CD8-positive, alpha-beta T cell (primary cell): ENCODE measurements at regions of chr2 and their contacts with region 1.

Region 1: GRCh38 chr2:238462782-238463396 is 36.2 kb downstream of the ASB1 start:
- DNase-seq: peak in 2 of 9 experiments; percentile 57 to 69
- ATAC-seq: peak; percentile 77
- H3K4me3 ChIP-seq: no peak overlapping the region
- H3K4me3 Mint-ChIP-seq: no peak overlapping the region
- H3K27ac ChIP-seq: no peak overlapping the region
- H3K27ac Mint-ChIP-seq: no peak overlapping the region
- H3K4me1 ChIP-seq: no peaks in the 10 kb centered on the region
- H3K4me1 Mint-ChIP-seq: no peaks in the 10 kb centered on the region
- H3K27me3 ChIP-seq: no peaks in the 10 kb centered on the region
- H3K27me3 Mint-ChIP-seq: no peaks in the 10 kb centered on the region
- CTCF ChIP-seq: peak; percentile 90

Region 2: DNA sequence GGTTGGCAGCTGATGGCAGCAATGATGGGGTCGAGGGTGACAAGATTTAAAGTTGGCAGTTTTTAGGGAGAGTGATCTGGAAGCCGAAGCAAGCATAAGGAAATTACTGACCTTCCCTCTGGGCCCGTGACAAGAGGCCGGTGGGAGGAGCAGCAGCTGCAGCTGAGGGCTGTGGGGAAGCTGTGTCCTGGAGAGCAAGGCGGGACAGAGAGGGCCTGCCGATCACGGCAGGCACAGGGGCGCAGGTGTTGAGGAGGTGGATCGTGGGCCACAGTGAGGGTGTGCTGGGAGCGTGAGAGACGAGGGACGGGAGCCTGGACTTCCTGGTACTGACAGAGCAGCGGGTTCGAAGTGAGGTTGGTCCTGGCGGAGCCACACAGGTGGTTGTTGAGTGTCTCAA is 111.6 kb before region 1 on chr2:
- CTCF ChIA-PET with region 1: no interaction called
- POLR2A ChIA-PET with region 1: no interaction called
- intact Hi-C with region 1: no loop called
- DNase-seq: no peak
- ATAC-seq: no peak
- H3K4me3 ChIP-seq: no peak overlapping the region
- H3K4me3 Mint-ChIP-seq: no peak overlapping the region
- H3K27ac ChIP-seq: no peak overlapping the region
- H3K27ac Mint-ChIP-seq: no peak overlapping the region
- H3K4me1 ChIP-seq: no peaks in the 10 kb centered on the region
- H3K4me1 Mint-ChIP-seq: no peaks in the 10 kb centered on the region
- H3K27me3 ChIP-seq: no peaks in the 10 kb centered on the region
- H3K27me3 Mint-ChIP-seq: no peaks in the 10 kb centered on the region
- CTCF ChIP-seq: no peak

Region 3: DNA sequence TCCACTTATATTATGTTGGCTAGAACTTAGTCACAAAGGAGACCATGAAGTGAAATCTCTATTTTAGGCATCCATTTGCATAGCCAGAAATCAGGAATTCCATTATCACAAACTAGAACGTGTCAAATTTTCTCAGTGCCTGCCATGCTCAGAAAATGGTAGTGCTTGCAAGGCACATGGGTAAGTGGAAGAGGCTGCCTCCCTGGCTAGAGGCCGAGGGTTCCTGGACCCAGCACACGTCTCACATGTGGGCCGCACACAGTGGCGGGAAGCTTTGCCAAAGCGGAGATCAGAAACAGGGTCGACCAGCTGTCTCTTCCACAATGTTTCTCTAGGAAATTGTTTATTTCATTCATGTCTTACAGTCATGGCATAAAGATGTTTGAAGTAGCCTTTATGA is 100.3 kb before region 1 on chr2:
- CTCF ChIA-PET with region 1: interaction called, 13 read pairs
- POLR2A ChIA-PET with region 1: no interaction called
- intact Hi-C with region 1: loop called in 1 of 2 experiments (anchors 1 kb)
- DNase-seq: no peak
- ATAC-seq: no peak
- H3K4me3 ChIP-seq: no peak overlapping the region
- H3K4me3 Mint-ChIP-seq: no peak overlapping the region
- H3K27ac ChIP-seq: no peak overlapping the region
- H3K27ac Mint-ChIP-seq: no peak overlapping the region
- H3K4me1 ChIP-seq: no peaks in the 10 kb centered on the region
- H3K4me1 Mint-ChIP-seq: no peaks in the 10 kb centered on the region
- H3K27me3 ChIP-seq: no peaks in the 10 kb centered on the region
- H3K27me3 Mint-ChIP-seq: no peaks in the 10 kb centered on the region
- CTCF ChIP-seq: no peak

Region 4: DNA sequence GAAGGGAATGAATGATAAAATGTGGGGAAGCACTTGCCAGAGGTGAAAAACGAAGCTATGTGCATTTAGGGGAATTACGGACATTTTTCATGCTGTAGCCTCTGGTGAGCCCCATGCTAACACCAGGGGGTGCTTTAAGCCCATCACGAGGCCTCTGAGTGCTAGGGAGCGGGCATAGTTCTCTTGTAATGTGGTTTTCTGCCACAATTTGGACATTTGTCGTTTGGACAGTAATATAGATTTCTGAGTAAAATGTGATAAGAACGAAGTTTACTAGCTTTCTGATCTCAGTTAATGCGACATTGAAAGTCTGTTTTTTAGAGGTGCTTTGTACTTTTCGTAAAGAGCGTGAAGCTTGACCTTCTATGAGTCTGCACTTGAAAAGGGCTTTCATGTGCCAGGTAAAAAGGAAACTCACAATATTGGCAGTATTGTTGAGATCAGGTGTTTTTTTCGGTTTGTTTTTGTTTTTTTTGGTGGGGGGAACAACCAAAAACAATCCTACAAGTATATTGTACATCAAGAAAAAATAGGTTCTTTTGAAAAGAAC is 92.0 kb before region 1 on chr2:
- CTCF ChIA-PET with region 1: interaction called, 21 read pairs
- POLR2A ChIA-PET with region 1: no interaction called
- intact Hi-C with region 1: loop called (anchors 1 kb)
- DNase-seq: peak in 8 of 9 experiments; percentile 30 to 74 (median 64)
- ATAC-seq: peak; percentile 74
- H3K4me3 ChIP-seq: no peak overlapping the region
- H3K4me3 Mint-ChIP-seq: no peak overlapping the region
- H3K27ac ChIP-seq: no peak overlapping the region
- H3K27ac Mint-ChIP-seq: no peak overlapping the region
- H3K4me1 ChIP-seq: no peaks in the 10 kb centered on the region
- H3K4me1 Mint-ChIP-seq: peaks cover 7% of the 10 kb centered on the region
- H3K27me3 ChIP-seq: no peaks in the 10 kb centered on the region
- H3K27me3 Mint-ChIP-seq: no peaks in the 10 kb centered on the region
- CTCF ChIP-seq: peak; percentile 73

Region 5: DNA sequence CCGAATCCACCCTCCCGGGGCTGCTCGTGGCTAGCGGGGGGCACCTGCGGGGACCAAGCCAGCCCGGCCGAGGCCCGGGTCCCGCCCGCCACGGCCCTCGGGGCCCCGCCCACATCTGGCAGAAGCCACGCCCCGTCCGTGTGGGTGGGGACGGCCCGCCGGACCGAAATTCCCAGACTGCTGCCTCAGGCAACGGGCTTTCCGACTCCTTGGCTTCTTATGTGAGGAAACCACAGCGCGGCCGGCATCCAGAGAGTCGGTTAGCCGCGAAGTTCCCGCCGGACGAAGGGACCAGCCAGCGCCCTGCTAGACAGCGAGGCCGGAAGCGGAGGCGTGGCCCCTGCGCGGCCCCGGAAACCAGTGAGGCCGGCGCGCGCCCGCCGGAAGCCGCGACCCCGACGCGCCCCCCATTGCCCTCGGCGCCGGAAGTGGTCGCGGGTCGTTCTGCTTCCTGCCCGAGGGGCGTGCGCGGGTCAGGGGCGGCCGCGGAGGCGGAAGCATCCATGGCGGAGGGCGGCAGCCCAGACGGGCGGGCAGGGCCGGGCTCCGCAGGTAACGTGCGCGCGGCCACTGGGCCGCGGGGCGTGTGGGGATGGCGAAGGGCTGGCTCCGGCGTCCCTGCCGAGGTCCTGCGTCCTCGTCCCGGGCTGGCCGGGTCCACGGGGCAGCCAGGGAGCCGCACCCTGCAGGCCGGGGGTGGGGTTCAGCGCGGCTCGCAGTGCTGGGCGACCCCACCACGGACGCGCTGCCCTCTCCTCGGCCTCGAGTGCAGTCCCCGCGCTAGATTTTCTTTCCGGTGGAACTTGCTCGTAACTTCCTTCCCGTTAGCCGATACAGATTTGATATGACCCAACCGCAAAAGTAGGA is 36.1 kb before region 1 on chr2 and contains the start of gene ASB1:
- CTCF ChIA-PET with region 1: no interaction called
- POLR2A ChIA-PET with region 1: no interaction called
- intact Hi-C with region 1: loop called in 1 of 2 experiments (anchors 1 kb)
- DNase-seq: peak; percentile 62 to 94 (median 83)
- ATAC-seq: peak; percentile 78
- H3K4me3 ChIP-seq: peak within 1 kb of the TSS; percentile 66 to 79
- H3K4me3 Mint-ChIP-seq: peak within 1 kb of the TSS; percentile 92
- H3K27ac ChIP-seq: peak within 1 kb of the TSS; percentile 78 to 87
- H3K27ac Mint-ChIP-seq: peak within 1 kb of the TSS; percentile 97
- H3K4me1 ChIP-seq: peaks cover 37% of the 10 kb centered on the region
- H3K4me1 Mint-ChIP-seq: peaks cover 49% of the 10 kb centered on the region
- H3K27me3 ChIP-seq: no peaks in the 10 kb centered on the region
- H3K27me3 Mint-ChIP-seq: no peaks in the 10 kb centered on the region
- CTCF ChIP-seq: no peak
- total RNA-seq, gene ASB1: 16.3 to 25.3 TPM